IMR-90 (cell line): ENCODE measurements at regions of chr6 and their contacts with region 1.

Region 1: DNA sequence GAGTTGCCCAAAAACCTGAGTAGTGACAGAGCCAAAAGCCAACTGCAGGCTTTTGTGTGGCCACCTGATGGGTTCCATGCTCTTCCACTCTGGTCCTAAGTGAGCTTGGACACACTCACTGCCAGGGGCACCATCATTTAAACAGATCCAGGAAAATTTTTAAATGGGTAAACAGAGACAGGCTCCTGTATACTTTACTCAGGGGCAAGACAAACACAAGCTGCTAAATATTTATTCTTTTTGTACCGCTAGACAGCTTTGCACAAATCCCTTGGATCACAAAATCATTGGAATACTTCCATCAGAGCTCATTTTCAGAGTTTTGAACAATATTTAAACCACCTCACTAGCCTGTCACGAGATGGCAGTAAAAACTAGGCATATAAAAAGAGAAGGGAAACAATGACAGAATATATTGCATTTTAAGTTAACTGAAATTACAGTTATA is 31.4 kb downstream of the GCLC start:
- DNase-seq: no peak
- ATAC-seq: peak; percentile 75
- H3K4me3 ChIP-seq: no peak overlapping the region
- H3K27ac ChIP-seq: peak overlapping the region; percentile 74; the same call in 1 of the 2 replicates
- H3K4me1 ChIP-seq: peaks cover 4% of the 10 kb centered on the region; the same call in 1 of the 2 replicates
- H3K27me3 ChIP-seq: no peaks in the 10 kb centered on the region
- CTCF ChIP-seq: peak; percentile 49
- POLR2A ChIP-seq: no peak
- RAD21 ChIP-seq: peak; percentile 61

Region 2: DNA sequence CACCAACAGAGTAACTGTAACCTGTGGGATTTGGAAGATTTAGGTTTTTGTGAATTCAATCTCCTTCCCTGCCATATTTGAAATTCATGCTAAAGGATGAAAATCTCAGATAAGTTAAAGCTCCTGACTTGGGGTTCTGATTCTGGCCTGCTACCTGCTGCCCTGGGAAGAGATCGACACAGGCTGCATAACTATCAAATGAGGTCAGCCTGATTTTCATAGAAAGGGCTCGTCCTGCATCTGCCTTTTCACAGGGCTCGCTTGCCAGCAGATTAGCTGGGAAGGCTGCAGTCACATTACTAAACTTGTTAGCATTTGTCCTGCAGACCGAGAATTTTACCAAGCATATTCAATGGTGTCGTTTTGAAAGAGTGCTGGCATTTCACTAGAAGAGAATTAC is 16.8 kb after region 1 on chr6:
- CTCF ChIA-PET with region 1: interaction called, 9 read pairs
- POLR2A ChIA-PET with region 1: no interaction called
- dilution Hi-C with region 1: no loop called
- in situ Hi-C with region 1: no loop called
- intact Hi-C with region 1: loop called (anchors 2 kb)
- DNase-seq: peak; percentile 43
- ATAC-seq: no peak
- H3K4me3 ChIP-seq: no peak overlapping the region
- H3K27ac ChIP-seq: no peak overlapping the region
- H3K4me1 ChIP-seq: peaks cover 30% of the 10 kb centered on the region
- H3K27me3 ChIP-seq: no peaks in the 10 kb centered on the region
- CTCF ChIP-seq: no peak
- POLR2A ChIP-seq: no peak
- RAD21 ChIP-seq: no peak

Region 3: DNA sequence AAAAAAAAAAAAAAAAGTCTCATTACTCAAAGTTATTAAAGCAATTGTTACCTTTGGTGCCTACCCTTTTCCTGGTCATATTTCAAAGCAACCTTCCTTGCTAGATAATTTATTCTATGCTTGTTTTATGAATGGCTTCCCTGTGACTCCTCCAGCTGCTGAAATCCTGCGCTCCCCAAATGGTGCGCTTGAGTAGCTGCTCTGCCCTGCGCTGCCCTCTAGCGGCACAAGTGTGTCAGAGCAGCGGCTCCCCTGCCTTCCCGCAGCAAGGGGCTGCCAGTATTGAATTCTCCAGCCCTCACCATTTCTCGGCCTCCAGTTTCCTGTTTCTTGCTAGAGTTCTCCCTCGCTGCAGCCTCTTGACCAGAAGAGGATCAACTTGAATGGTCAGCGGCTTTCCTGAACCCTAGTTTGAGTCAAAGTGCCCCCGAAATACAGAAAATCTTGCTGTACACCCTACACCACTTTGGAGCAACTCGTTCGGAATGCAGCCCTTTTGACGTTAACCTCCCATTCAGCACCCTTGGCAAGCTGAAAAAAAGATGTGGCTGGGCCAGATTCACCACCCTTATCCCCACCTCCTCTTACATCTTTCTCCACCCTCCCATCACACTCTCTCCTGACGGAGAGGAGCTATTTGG is 212.4 kb after region 1 on chr6:
- CTCF ChIA-PET with region 1: interaction called, 14 read pairs
- POLR2A ChIA-PET with region 1: no interaction called
- dilution Hi-C with region 1: no loop called
- in situ Hi-C with region 1: no loop called
- intact Hi-C with region 1: loop called (anchors 5 kb)
- DNase-seq: peak; percentile 69
- ATAC-seq: peak; percentile 94
- H3K4me3 ChIP-seq: no peak overlapping the region
- H3K27ac ChIP-seq: no peak overlapping the region
- H3K4me1 ChIP-seq: peaks cover 3% of the 10 kb centered on the region; the same call in 1 of the 2 replicates
- H3K27me3 ChIP-seq: no peaks in the 10 kb centered on the region
- CTCF ChIP-seq: peak; percentile 95
- POLR2A ChIP-seq: no peak
- RAD21 ChIP-seq: peak; percentile 89